Lower lobe of right lung (tissue), 2 donors: ENCODE measurements at regions of chr11 and their contacts with region 1.

Region 1: DNA sequence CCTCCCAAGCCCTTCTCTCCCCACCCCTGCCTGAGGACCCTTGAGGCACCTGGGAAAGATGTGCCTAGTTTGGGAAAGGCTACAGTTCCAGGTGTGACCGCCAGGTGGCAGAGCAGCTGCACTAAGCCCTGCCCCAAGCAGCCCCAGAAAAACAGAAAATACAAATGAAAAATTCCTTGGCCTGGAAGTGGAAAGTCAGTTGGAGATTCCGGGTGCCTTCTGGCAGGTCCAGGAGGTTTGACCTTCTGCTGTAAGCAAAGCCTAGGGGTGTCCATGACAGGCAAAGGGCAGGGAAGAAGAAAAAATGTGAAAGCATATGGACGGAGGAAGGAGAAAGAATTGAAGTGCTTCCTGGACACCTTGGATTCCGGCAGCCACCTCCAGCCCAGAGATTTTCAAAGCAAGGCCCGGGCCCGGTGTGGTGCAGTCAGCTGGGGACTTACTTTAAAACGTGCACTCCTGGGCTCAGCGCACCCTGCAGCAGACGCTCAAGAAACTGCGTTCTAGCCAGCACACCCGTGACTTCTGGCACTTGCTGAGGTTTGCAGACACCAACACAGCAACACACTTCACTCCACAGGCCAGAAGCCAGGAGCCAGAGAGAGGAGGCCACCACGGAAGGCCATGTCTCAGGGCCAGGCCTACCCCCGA is 37.3 kb upstream of the SLC22A12 start:
- DNase-seq: no peak
- ATAC-seq: peak; percentile 65 to 71
- H3K4me3 ChIP-seq: no peak overlapping the region
- H3K27ac ChIP-seq: peak overlapping the region; percentile 37
- H3K4me1 ChIP-seq: peaks cover 14% of the 10 kb centered on the region
- H3K27me3 ChIP-seq: peaks cover 10% of the 10 kb centered on the region
- CTCF ChIP-seq: peak; percentile 98

Region 2: DNA sequence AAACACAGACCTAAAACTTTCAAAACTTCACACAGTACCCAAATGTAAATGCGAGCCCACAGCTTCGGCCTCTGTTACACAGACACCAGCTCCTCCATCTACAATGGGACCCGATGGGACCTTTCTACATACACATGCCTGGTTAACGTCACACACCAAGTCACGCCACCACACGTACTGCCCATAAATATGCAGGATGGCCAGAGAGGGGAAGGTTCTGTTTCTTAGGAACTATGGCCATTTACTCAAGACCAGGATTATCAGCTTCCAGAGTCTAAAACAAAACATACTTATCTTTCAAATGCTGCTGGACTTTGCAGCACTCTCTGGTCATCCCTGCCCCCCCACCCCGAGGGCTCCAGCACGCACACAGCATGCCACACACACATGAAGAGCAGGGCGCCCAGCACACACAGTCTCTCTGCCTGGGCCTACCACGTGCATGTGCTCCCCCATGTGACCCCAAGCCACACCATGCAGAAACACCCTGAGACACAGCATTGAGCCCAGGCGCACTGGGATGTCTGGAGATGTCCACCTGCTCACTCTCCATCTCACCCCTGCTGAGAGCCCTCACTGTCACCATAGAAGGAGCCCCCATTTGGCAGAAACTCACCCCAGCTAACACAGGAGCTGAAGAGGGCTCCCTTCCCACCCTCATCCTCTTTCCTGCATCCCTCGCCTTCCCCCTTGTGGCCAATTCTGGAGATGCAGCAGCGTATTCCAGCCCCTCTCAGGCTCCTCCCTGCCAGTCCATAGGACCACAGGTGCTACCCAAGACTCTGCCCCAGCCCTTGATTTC is 99.1 kb after region 1 on chr11:
- intact Hi-C with region 1: loop called (anchors 5 kb)
- DNase-seq: peak; percentile 67
- ATAC-seq: peak; percentile 66 to 80
- H3K4me3 ChIP-seq: no peak overlapping the region
- H3K27ac ChIP-seq: no peak overlapping the region
- H3K4me1 ChIP-seq: peaks cover 26% of the 10 kb centered on the region
- H3K27me3 ChIP-seq: peaks cover 4% of the 10 kb centered on the region
- CTCF ChIP-seq: peak; percentile 79